ENCODE measurements at regions of chr10 and their contacts with region 1.

Region 1: GRCh38 chr10:7525314-7526016 is 114.6 kb upstream of the SFMBT2 start:
- DNase-seq: peak; percentile 50 to 93
- H3K4me3 ChIP-seq: no peak overlapping the region
- H3K27ac ChIP-seq: no peak overlapping the region
- H3K4me1 ChIP-seq: no peaks in the 10 kb centered on the region
- H3K27me3 ChIP-seq: peaks cover 0 to 52% (median 5%) of the 10 kb centered on the region in 3 donors
- CTCF ChIP-seq: peak in 5 of 7 experiments; percentile 51 to 82 (median 71)
- EP300 ChIP-seq: no peak
- POLR2A ChIP-seq: no peak

Region 2: DNA sequence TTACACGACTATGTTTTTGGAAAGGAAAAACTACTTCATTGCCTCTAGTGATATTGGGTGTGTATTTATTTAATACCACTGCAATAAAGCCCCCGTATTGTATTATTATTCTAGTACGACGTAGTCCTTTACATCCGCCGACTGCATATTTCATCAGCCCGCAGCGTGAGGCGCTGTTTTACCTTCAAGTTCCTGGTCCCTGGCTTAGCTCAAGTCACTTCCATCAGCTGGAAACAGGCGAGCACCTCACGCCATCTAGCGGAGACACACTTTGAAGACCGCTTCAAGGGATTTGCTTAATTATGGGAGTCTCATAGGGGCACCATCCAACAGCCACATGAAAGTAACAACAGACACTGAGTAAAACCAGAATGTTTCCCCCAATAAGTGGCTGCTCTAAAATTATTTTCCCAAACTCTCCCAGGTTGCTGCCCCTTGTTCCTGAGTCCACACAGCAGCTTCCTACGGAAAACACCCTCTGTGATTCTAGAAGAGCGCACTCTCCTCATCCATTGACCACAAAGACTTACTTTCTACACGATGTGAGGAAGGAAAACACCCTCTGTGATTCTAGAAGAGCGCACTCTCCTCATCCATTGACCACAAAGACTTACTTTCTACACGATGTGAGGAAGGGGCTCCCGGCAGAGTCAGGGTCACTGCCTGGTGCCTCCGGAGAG is 161.9 kb after region 1 on chr10:
- intact Hi-C with region 1: loop called (anchors 5 kb)
- DNase-seq: peak; percentile 84 to 97
- H3K4me3 ChIP-seq: no peak overlapping the region
- H3K27ac ChIP-seq: no peak overlapping the region
- H3K4me1 ChIP-seq: no peaks in the 10 kb centered on the region
- H3K27me3 ChIP-seq: peaks cover 0 to 14% (median 0%) of the 10 kb centered on the region in 3 donors
- CTCF ChIP-seq: peak in 5 of 7 experiments; percentile 75 to 95 (median 85)
- EP300 ChIP-seq: no peak
- POLR2A ChIP-seq: no peak

Region 3: GRCh38 chr10:7707102-7707501 is 181.6 kb after region 1 on chr10:
- intact Hi-C with region 1: no loop called
- DNase-seq: peak in 1 of 2 donors; percentile 16
- H3K4me3 ChIP-seq: no peak overlapping the region
- H3K27ac ChIP-seq: no peak overlapping the region
- H3K4me1 ChIP-seq: no peaks in the 10 kb centered on the region
- H3K27me3 ChIP-seq: peaks cover 0 to 31% (median 11%) of the 10 kb centered on the region in 3 donors
- CTCF ChIP-seq: no peak
- EP300 ChIP-seq: no peak
- POLR2A ChIP-seq: no peak

Region 4: DNA sequence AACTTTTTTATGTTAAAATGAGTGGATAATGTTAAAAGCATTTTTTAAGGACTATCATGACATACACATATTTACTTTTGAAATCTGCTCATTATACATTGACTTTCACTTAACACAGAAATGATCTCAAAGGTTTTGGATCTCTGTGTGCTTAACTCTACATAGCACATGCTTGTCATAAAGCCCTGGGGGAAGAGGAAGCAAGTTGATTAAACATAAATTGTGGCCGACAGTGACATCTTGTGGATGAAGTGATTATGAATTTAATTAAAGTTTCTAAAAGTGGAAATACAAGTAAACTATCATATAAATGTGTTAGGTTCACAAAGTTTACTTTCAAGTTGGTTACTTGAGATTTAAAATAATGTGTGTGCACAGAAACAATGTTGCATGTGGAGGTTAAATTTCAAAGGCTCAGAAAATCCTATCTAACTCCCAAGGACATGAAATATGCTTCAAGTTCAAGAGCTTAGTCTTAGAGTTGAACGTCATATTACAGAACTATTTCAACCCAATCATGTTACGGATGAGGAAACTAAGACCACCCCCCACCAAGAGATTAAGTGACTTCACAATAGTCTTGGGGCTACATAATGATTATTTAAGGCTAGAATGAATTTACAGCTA is 1776.8 kb after region 1 on chr10:
- intact Hi-C with region 1: loop called (anchors 10 kb)
- DNase-seq: peak in 1 of 2 donors; percentile 77
- H3K4me3 ChIP-seq: no peak overlapping the region
- H3K27ac ChIP-seq: no peak overlapping the region
- H3K4me1 ChIP-seq: no peaks in the 10 kb centered on the region
- H3K27me3 ChIP-seq: no peaks in the 10 kb centered on the region
- CTCF ChIP-seq: peak in 3 of 7 experiments; percentile 35 to 40 (median 37)
- EP300 ChIP-seq: no peak
- POLR2A ChIP-seq: no peak

Measured in stomach (tissue), 19 donors.